PC-9 (cell line): ENCODE measurements at regions of chr7 and their contacts with region 1.

Region 1: GRCh38 chr7:84144480-84144879 is 50.1 kb downstream of the SEMA3A start:
- DNase-seq: no peak
- H3K4me3 ChIP-seq: no peak overlapping the region
- H3K27ac ChIP-seq: 0 out of 2 replicates have a peak overlapping the region, but pooled peaks have one; percentile 3
- H3K4me1 ChIP-seq: no peaks in the 10 kb centered on the region; the same call in 1 of the 2 replicates
- H3K27me3 ChIP-seq: no peaks in the 10 kb centered on the region
- CTCF ChIP-seq: no peak

Region 2: GRCh38 chr7:84095971-84096370 is 48.5 kb before region 1 on chr7:
- CTCF ChIA-PET with region 1: no interaction called
- POLR2A ChIA-PET with region 1: no interaction called
- intact Hi-C with region 1: no loop called
- DNase-seq: no peak
- H3K4me3 ChIP-seq: no peak overlapping the region
- H3K27ac ChIP-seq: no peak overlapping the region
- H3K4me1 ChIP-seq: 0 out of 2 replicates have a peak, but pooled peaks cover 7% of the 10 kb centered on the region
- H3K27me3 ChIP-seq: no peaks in the 10 kb centered on the region
- CTCF ChIP-seq: no peak

Region 3: DNA sequence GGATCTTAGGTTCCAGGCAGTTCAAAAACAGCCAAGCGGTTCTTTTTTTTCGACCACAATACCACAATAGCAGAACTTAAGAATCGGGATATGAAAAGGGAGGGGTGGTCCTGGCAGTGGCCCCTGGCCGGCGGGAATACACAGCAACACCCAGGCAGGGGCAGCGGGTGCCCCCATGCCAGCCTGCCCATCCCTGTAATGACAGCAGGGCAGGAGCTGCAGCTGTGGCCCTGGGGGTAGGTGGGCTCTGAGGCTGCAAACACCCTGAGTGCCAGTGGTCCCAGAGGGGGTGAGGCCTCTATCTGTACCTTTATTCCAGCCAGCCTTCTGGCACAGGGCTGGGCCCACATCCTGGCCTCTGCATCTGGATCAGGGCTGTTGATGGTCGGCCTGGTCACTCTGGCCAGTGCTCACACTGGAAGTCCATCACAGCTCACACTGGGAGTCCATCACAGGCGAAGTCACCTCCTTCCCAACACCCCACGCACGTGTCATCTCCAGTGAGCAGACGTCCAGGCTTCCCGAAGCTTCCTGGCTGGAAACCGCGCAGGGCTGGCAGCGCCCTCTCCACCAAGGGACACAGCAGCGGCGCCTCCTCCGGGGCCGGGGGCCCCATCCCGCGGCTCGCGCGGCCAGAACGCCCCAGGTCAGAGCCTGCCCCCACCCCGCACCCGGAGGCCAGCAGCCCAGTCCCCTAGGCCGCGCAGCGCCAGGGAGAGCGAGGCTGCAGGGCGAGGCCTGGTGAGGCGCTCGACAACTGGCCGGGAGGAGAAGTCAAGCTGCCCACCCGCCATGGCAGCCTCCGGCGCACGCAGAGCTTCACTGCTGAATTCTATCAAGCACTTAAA is 795.2 kb after region 1 on chr7:
- CTCF ChIA-PET with region 1: no interaction called
- POLR2A ChIA-PET with region 1: interaction called, 11 read pairs
- intact Hi-C with region 1: no loop called
- DNase-seq: no peak
- H3K4me3 ChIP-seq: no peak overlapping the region
- H3K27ac ChIP-seq: no peak overlapping the region
- H3K4me1 ChIP-seq: no peaks in the 10 kb centered on the region
- H3K27me3 ChIP-seq: no peaks in the 10 kb centered on the region
- CTCF ChIP-seq: no peak